ENCODE measurements at regions of chr16 and their contacts with region 1.

Region 1: GRCh38 chr16:72066747-72067146 is 3.7 kb downstream of the HPR start:
- DNase-seq: peak in 3 of 14 experiments; percentile 25 to 52 (median 41)
- ATAC-seq: no peak
- H3K4me3 ChIP-seq: no peak overlapping the region
- H3K4me3 Mint-ChIP-seq: no peak overlapping the region
- H3K27ac ChIP-seq: no peak overlapping the region
- H3K27ac Mint-ChIP-seq: no peak overlapping the region
- H3K4me1 ChIP-seq: no peaks in the 10 kb centered on the region
- H3K4me1 Mint-ChIP-seq: no peaks in the 10 kb centered on the region
- H3K27me3 ChIP-seq: no peaks in the 10 kb centered on the region
- H3K27me3 Mint-ChIP-seq: no peaks in the 10 kb centered on the region
- CTCF ChIP-seq: peak; percentile 65

Region 2: DNA sequence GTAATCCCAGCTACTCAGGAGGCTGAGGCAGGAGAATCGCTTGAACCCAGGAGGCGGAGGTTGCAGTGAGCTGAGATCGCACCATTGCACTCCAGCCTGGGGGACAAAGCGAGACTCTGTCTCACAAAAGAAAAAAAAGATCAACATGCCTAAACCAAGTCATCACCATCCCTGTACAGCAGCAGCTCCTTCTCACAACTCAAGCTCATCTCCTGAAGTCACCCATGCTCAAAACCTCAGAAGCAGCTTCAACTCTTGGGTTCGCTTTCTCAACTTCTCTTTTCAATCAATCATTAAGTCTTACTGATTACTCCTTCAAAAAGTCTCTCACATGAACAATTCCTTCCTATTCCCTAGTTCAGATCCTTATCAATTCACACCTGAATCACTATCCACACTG is 373.6 kb before region 1 on chr16:
- CTCF ChIA-PET with region 1: no interaction called
- POLR2A ChIA-PET with region 1: no interaction called
- intact Hi-C with region 1: no loop called
- DNase-seq: no peak
- ATAC-seq: no peak
- H3K4me3 ChIP-seq: no peak overlapping the region
- H3K4me3 Mint-ChIP-seq: no peak overlapping the region
- H3K27ac ChIP-seq: no peak overlapping the region
- H3K27ac Mint-ChIP-seq: no peak overlapping the region
- H3K4me1 ChIP-seq: no peaks in the 10 kb centered on the region
- H3K4me1 Mint-ChIP-seq: peaks cover 5% of the 10 kb centered on the region
- H3K27me3 ChIP-seq: no peaks in the 10 kb centered on the region
- H3K27me3 Mint-ChIP-seq: no peaks in the 10 kb centered on the region
- CTCF ChIP-seq: no peak

Region 3: GRCh38 chr16:72099377-72099818 is 32.7 kb after region 1 on chr16:
- CTCF ChIA-PET with region 1: no interaction called
- POLR2A ChIA-PET with region 1: no interaction called
- intact Hi-C with region 1: loop called in 1 of 2 experiments (anchors 1 kb)
- DNase-seq: peak in 11 of 14 experiments; percentile 9 to 68 (median 20)
- ATAC-seq: peak; percentile 90
- H3K4me3 ChIP-seq: no peak overlapping the region
- H3K4me3 Mint-ChIP-seq: no peak overlapping the region
- H3K27ac ChIP-seq: no peak overlapping the region
- H3K27ac Mint-ChIP-seq: no peak overlapping the region
- H3K4me1 ChIP-seq: peaks cover 10% of the 10 kb centered on the region
- H3K4me1 Mint-ChIP-seq: peaks cover 30% of the 10 kb centered on the region
- H3K27me3 ChIP-seq: no peaks in the 10 kb centered on the region
- H3K27me3 Mint-ChIP-seq: no peaks in the 10 kb centered on the region
- CTCF ChIP-seq: peak; percentile 45

Region 4: DNA sequence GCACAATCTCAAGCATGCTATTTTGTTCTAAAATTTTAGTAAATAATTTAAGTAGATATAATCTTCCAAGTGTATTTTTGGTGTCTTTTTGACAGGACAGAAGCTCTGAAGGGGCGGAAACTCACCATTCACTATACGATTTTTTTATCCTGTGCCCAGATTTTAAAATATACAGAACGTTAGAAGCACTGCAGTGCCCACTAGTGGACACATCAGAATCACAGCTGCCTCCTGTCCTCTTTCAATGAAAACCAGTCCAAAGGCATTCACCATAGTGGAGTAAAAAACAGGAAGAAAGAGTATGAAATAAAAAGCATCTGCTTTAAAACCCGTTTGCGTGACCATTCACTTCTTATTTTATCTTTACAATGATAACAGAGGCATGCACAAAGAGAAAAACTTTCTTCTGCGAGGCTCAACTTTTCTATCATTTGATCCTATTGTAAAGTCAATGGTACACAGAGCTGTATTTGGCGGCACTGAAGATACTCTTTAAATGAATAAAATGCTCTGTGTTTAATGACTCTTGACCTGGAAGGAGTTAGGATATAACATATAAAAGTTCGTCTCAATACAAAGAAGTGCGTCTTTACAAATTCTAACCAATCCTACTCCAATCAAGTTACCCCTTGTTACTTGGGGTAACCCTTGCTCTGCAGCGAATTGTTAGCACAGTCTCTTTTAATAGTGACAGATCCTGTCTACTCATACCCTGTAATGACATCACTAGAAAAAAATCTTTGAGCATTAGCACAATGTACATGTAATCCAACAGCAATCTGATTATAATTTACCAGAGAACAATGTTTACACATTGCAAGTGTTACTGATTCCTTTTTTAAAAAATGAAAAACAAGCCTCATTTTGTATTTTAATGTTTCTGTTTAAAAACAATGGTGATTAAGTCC is 1890.1 kb after region 1 on chr16:
- CTCF ChIA-PET with region 1: no interaction called
- POLR2A ChIA-PET with region 1: no interaction called
- intact Hi-C with region 1: loop called in 1 of 2 experiments (anchors 10 kb)
- DNase-seq: peak in 5 of 14 experiments; percentile 8 to 47 (median 25)
- ATAC-seq: no peak
- H3K4me3 ChIP-seq: no peak overlapping the region
- H3K4me3 Mint-ChIP-seq: no peak overlapping the region
- H3K27ac ChIP-seq: no peak overlapping the region
- H3K27ac Mint-ChIP-seq: no peak overlapping the region
- H3K4me1 ChIP-seq: no peaks in the 10 kb centered on the region
- H3K4me1 Mint-ChIP-seq: no peaks in the 10 kb centered on the region
- H3K27me3 ChIP-seq: no peaks in the 10 kb centered on the region
- H3K27me3 Mint-ChIP-seq: peaks cover 5% of the 10 kb centered on the region
- CTCF ChIP-seq: peak; percentile 58

Measured in CD4-positive, alpha-beta T cell (primary cell).